Mammary epithelial cell (primary cell): ENCODE measurements at regions of chr13 and their contacts with region 1.

Region 1: DNA sequence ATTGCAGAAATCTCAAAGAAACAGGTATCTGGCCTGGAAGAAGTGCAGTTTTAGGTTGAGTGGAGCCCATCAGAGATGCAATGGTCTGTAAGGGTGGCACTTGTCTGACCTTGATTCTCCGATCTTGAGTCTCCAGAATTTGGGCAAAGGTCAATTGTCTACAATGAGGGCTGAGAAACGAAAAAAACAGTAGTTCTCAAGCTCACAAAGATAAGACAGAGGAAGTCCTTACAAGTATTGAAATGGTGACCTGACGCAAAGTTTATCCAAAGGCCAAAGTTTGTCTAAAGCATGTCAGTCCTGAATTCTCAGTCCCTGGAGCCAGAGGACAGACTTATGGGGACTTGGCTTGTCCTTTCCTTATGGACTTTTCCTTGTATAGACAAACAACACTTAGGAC is 40.3 kb downstream of the CYSLTR2 start:
- DNase-seq: no peak
- H3K4me3 ChIP-seq: no peak overlapping the region
- H3K27ac ChIP-seq: no peak overlapping the region
- H3K4me1 ChIP-seq: no peaks in the 10 kb centered on the region
- H3K27me3 ChIP-seq: no peaks in the 10 kb centered on the region
- CTCF ChIP-seq: no peak

Region 2: GRCh38 chr13:48739386-48739964 is 45.5 kb after region 1 on chr13:
- CTCF ChIA-PET with region 1: no interaction called
- dilution Hi-C with region 1: loop called (anchors 5 kb)
- in situ Hi-C with region 1: no loop called
- intact Hi-C with region 1: no loop called
- DNase-seq: no peak
- H3K4me3 ChIP-seq: no peak overlapping the region
- H3K27ac ChIP-seq: no peak overlapping the region
- H3K4me1 ChIP-seq: no peaks in the 10 kb centered on the region
- H3K27me3 ChIP-seq: no peaks in the 10 kb centered on the region
- CTCF ChIP-seq: no peak